ENCODE measurements at regions of chr21 and their contacts with region 1.

Region 1: DNA sequence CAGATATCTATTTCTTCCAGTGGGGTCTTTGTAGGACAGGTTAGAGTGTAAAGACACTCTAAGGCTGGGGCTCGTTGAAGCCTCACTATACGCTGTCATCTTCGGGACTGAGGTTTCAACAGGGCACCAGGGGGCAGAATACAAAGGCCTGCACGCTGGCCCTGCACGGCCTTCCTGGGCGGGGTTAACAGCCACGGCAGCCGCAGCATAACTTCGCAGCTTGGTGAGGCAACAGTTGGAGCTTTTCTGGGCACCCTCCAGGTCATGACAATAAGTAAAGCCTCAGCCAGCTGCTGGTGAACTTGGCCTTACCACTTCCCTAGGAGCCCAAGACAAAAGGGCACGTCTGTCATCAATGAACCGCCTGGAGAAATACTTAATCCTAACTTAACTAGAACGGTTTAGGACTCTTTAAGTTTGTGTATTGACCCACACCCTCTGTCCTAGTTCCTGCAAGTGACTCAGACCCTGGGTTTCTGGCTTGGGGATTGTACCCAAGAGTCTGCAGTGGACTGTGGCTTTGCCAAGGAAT is 2.3 kb upstream of the RUNX1 start:
- DNase-seq: peak; percentile 72
- H3K4me3 Mint-ChIP-seq: peak overlapping the region; percentile 93
- H3K27ac Mint-ChIP-seq: peak overlapping the region; percentile 83
- H3K4me1 Mint-ChIP-seq: peaks cover 52% of the 10 kb centered on the region
- H3K27me3 Mint-ChIP-seq: no peaks in the 10 kb centered on the region

Region 2: DNA sequence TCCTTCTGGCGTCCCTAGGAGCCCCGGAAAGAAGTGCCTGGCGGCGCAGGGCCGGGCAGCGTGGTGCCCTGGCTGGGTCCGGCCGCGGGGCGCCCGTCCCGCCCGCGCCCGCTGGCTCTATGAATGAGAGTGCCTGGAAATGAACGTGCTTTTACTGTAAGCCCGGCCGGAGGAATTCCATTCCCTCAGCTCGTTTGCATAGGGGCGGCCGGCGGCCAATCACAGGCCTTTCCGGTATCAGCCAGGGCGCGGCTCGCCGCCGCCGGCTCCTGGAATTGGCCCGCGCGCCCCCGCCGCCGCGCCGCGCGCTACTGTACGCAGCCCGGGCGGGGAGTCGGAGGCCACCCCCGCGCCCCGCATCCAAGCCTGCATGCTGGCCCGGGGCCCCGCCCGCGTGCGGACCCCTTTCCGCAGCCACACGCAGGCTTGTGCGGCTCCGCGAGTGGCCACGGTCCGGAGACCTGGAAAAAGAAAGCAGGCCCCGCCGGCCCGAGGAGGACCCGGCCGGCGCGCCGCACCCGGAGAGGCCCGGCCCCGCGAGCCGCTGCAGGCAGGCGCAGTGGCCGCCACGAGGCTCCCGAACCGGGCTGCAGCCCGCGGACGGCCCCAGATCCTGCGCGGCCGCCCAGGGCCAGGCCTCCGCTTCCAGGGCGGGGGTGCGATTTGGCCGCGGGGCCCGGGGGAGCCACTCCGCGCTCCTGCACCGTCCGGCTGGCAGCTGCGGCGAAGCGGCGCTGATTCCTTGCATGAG is 162.6 kb before region 1 on chr21:
- intact Hi-C with region 1: loop called (anchors 1 kb)
- DNase-seq: peak; percentile 80
- H3K4me3 Mint-ChIP-seq: peak overlapping the region; percentile 93
- H3K27ac Mint-ChIP-seq: peak overlapping the region; percentile 99
- H3K4me1 Mint-ChIP-seq: peaks cover 54% of the 10 kb centered on the region
- H3K27me3 Mint-ChIP-seq: peaks cover 3% of the 10 kb centered on the region

Region 3: GRCh38 chr21:35014302-35015041 is 36.9 kb before region 1 on chr21:
- intact Hi-C with region 1: loop called (anchors 1 kb)
- DNase-seq: no peak
- H3K4me3 Mint-ChIP-seq: peak overlapping the region; percentile 35
- H3K27ac Mint-ChIP-seq: no peak overlapping the region
- H3K4me1 Mint-ChIP-seq: peaks cover 77% of the 10 kb centered on the region
- H3K27me3 Mint-ChIP-seq: no peaks in the 10 kb centered on the region

Region 4: GRCh38 chr21:35138665-35139381 is 87.5 kb after region 1 on chr21:
- intact Hi-C with region 1: loop called (anchors 1 kb)
- DNase-seq: no peak
- H3K4me3 Mint-ChIP-seq: peak overlapping the region; percentile 62
- H3K27ac Mint-ChIP-seq: peak overlapping the region; percentile 93
- H3K4me1 Mint-ChIP-seq: peaks cover 27% of the 10 kb centered on the region
- H3K27me3 Mint-ChIP-seq: no peaks in the 10 kb centered on the region

Region 5: GRCh38 chr21:35342440-35342839 is 291.1 kb after region 1 on chr21:
- intact Hi-C with region 1: loop called (anchors 1 kb)
- DNase-seq: no peak
- H3K4me3 Mint-ChIP-seq: peak overlapping the region; percentile 75
- H3K27ac Mint-ChIP-seq: peak overlapping the region; percentile 99
- H3K4me1 Mint-ChIP-seq: peaks cover 51% of the 10 kb centered on the region
- H3K27me3 Mint-ChIP-seq: no peaks in the 10 kb centered on the region

Region 6: GRCh38 chr21:35528116-35529042 is 477.0 kb after region 1 on chr21:
- intact Hi-C with region 1: loop called (anchors 2 kb)
- DNase-seq: peak; percentile 26
- H3K4me3 Mint-ChIP-seq: peak overlapping the region; percentile 84
- H3K27ac Mint-ChIP-seq: peak overlapping the region; percentile 93
- H3K4me1 Mint-ChIP-seq: peaks cover 64% of the 10 kb centered on the region
- H3K27me3 Mint-ChIP-seq: no peaks in the 10 kb centered on the region